CD14-positive monocyte (primary cell): ENCODE measurements at regions of chr5 and their contacts with region 1.

Region 1: DNA sequence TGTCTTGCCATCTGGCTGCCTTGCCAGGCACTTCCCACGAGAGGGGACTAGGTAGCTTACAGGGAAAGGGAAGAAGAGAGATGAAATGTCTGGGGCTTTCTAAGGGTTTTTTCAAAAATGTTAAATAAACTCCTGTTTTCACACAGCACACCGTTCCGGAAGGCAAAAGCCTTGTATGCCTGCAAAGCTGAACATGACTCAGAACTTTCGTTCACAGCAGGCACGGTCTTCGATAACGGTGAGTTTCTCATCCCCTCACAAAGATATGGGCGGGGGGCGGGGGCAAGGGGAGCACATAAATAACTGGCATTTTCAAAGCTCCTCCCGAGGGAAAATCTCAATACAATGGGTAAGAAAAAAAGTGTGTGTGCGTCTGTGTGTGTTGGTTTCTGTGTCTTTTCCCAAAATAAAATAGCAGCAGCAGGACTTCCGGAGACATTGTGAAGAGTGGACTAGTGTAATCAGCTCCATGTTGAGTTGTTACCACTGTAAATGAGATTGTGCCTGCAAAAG is 189.6 kb downstream of the NR3C1 start:
- DNase-seq: no peak
- H3K4me3 ChIP-seq: no peak overlapping the region
- H3K4me3 Mint-ChIP-seq: no peak overlapping the region
- H3K27ac ChIP-seq: no peak overlapping the region
- H3K27ac Mint-ChIP-seq: peak overlapping the region in 2 of 7 donors; percentile 20 to 48
- H3K4me1 ChIP-seq: peaks cover 25 to 31% of the 10 kb centered on the region in 2 donors
- H3K4me1 Mint-ChIP-seq: peaks cover 47% of the 10 kb centered on the region
- H3K27me3 ChIP-seq: no peaks in the 10 kb centered on the region
- H3K27me3 Mint-ChIP-seq: peaks cover 0 to 2% (median 1%) of the 10 kb centered on the region in 3 donors
- CTCF ChIP-seq: no peak

Region 2: GRCh38 chr5:143262393-143263174 is 48.7 kb after region 1 on chr5:
- intact Hi-C with region 1: loop called in 1 of 2 experiments (anchors 10 kb)
- DNase-seq: peak; percentile 67 to 93 (median 82)
- H3K4me3 ChIP-seq: no peak overlapping the region
- H3K4me3 Mint-ChIP-seq: no peak overlapping the region
- H3K27ac ChIP-seq: peak overlapping the region in 1 of 2 donors; percentile 71
- H3K27ac Mint-ChIP-seq: peak overlapping the region; percentile 76 to 91 (median 87)
- H3K4me1 ChIP-seq: peaks cover 3 to 10% of the 10 kb centered on the region in 2 donors
- H3K4me1 Mint-ChIP-seq: peaks cover 18% of the 10 kb centered on the region
- H3K27me3 ChIP-seq: no peaks in the 10 kb centered on the region
- H3K27me3 Mint-ChIP-seq: no peaks in the 10 kb centered on the region
- CTCF ChIP-seq: no peak

Region 3: GRCh38 chr5:143311428-143311827 is 97.5 kb after region 1 on chr5:
- intact Hi-C with region 1: no loop called
- DNase-seq: peak; percentile 9 to 73 (median 58)
- H3K4me3 ChIP-seq: no peak overlapping the region
- H3K4me3 Mint-ChIP-seq: no peak overlapping the region
- H3K27ac ChIP-seq: peak overlapping the region in 1 of 2 donors; percentile 64
- H3K27ac Mint-ChIP-seq: peak overlapping the region; percentile 52 to 91 (median 82)
- H3K4me1 ChIP-seq: peaks cover 20 to 26% of the 10 kb centered on the region in 2 donors
- H3K4me1 Mint-ChIP-seq: peaks cover 51% of the 10 kb centered on the region
- H3K27me3 ChIP-seq: no peaks in the 10 kb centered on the region
- H3K27me3 Mint-ChIP-seq: no peaks in the 10 kb centered on the region
- CTCF ChIP-seq: no peak

Region 4: DNA sequence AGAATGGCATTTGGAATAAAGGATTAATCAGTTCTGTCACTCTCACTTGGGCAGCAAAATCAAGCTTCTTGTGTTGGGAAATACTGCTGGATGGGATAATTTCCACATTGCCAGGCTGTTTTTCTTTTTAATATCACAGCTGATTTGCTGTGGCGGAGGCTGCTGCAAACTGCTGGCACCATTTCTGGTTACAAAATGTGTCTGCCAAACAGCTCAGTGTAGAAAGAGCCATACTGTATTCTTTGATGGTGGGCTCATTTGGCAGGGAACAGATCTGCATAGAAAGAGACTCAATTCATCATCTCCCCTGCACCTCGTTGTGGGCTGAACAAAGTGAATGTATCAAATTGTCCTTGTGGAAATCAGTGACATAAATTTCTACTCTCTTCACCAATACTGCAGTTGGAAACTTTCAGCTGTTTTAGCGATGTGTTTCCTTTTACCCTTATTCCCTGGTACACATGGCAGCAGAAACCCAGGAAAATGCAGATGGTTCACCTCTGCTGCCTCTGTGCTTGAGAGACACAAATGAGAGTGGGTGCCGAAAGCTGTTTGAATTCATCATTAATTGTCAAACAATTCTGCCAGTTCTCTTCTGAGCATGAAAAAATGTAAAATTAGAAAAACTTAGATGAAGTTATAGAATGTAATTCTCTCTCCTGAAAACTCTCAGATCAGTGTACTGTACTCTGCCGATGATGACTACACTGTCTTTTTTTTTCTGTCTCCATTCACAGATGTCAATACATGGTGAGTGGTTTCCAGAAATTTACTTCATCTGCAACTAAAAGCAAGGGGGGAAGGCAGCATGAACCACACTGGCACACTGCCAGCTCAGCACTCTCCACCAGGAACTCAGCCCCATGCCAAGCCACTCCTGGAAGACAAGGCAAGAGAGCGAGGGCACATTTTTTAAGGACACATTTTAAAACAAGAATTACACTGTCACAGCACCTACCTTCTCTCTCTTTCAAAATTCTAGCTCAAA is 673.0 kb after region 1 on chr5:
- intact Hi-C with region 1: no loop called
- DNase-seq: no peak
- H3K4me3 ChIP-seq: no peak overlapping the region
- H3K4me3 Mint-ChIP-seq: no peak overlapping the region
- H3K27ac ChIP-seq: no peak overlapping the region
- H3K27ac Mint-ChIP-seq: no peak overlapping the region
- H3K4me1 ChIP-seq: no peaks in the 10 kb centered on the region
- H3K4me1 Mint-ChIP-seq: no peaks in the 10 kb centered on the region
- H3K27me3 ChIP-seq: no peaks in the 10 kb centered on the region
- H3K27me3 Mint-ChIP-seq: peaks cover 0 to 9% (median 5%) of the 10 kb centered on the region in 3 donors
- CTCF ChIP-seq: no peak